CD8-positive, alpha-beta T cell (primary cell): ENCODE measurements at regions of chr1 and their contacts with region 1.

Region 1: DNA sequence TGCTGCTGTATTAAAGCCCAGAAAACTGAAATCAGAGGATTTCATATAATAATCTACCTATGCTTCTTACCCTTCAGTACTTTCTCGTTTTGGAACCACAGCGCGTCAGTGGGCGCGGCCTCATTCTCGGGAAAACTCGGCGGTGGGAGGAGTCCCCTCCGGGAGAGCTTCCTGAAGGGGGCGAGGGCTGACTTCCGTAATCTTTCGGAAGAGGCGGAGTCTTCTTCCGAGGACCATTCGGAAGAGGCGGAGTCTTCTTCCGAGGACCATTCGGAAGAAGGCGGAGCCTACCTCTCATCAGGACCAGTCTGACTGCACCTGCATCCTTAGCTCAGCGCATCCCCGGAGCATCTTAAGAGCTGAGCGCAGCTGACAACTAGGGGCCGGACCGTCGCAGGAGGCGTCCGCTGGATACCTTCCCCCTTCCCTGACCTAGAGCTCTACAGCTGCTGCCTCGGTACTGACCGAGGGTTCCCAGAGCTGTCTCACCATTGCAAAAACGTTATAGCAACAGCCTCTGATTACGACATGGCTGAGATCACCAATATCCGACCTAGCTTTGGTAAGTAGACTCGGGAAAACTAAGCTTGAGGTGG is at the start of gene SYT11:
- DNase-seq: peak; percentile 79 to 97 (median 93)
- ATAC-seq: peak; percentile 85
- H3K4me3 ChIP-seq: peak within 1 kb of the TSS; percentile 61 to 64
- H3K4me3 Mint-ChIP-seq: peak within 1 kb of the TSS; percentile 83
- H3K27ac ChIP-seq: peak within 1 kb of the TSS; percentile 45 to 96
- H3K27ac Mint-ChIP-seq: peak within 1 kb of the TSS; percentile 90
- H3K4me1 ChIP-seq: peaks cover 37% of the 10 kb centered on the region
- H3K4me1 Mint-ChIP-seq: peaks cover 44% of the 10 kb centered on the region
- H3K27me3 ChIP-seq: no peaks in the 10 kb centered on the region
- H3K27me3 Mint-ChIP-seq: peaks cover 5% of the 10 kb centered on the region
- CTCF ChIP-seq: no peak
- total RNA-seq, gene SYT11: 6.9 to 8.6 TPM

Region 2: DNA sequence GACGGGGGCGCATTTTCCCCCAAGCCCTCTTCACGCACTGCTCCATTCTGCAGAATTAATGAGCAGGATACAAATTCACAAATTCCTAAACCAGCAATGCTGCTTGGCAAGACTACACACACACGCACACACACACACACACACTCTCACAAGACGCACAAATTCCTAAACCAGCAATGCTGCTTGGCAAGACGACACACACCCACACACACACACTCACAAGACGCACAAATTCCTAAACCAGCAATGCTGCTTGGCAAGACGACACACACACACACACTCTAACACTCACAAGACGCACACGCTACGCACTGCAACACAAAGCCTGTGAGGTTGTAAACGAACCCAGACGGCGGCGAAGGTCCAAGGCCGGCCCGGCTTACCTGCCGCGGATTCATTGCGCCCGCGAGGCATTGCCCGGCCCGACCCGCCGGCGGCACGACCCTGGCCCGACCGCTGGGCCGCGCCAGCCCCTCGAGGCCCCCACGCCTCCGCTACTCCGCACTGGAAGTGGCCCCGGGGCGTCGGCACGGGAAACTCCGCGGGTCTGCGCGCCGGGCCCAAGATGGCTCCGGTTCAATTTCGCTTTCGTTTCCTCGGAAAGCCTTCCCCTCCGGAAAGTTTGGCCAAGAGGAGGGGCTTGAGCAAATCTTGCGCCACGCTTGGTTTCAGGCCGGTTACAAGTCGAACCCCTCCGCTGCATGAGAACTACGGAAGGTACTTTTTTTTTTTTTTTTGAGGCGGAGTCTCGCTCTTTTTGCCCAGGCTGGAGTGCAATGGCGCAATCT is 1251.5 kb before region 1 on chr1 and contains the start of gene ADAR:
- CTCF ChIA-PET with region 1: no interaction called
- POLR2A ChIA-PET with region 1: no interaction called
- intact Hi-C with region 1: loop called in 1 of 2 experiments (anchors 5 kb)
- DNase-seq: peak; percentile 72 to 98 (median 87)
- ATAC-seq: peak; percentile 85
- H3K4me3 ChIP-seq: peak within 1 kb of the TSS; percentile 89 to 90
- H3K4me3 Mint-ChIP-seq: peak within 1 kb of the TSS; percentile 98
- H3K27ac ChIP-seq: peak within 1 kb of the TSS; percentile 92 to 96
- H3K27ac Mint-ChIP-seq: peak within 1 kb of the TSS; percentile 98
- H3K4me1 ChIP-seq: peaks cover 59% of the 10 kb centered on the region
- H3K4me1 Mint-ChIP-seq: peaks cover 73% of the 10 kb centered on the region
- H3K27me3 ChIP-seq: no peaks in the 10 kb centered on the region
- H3K27me3 Mint-ChIP-seq: no peaks in the 10 kb centered on the region
- CTCF ChIP-seq: no peak
- total RNA-seq, gene ADAR: 221 to 238 TPM

Region 3: DNA sequence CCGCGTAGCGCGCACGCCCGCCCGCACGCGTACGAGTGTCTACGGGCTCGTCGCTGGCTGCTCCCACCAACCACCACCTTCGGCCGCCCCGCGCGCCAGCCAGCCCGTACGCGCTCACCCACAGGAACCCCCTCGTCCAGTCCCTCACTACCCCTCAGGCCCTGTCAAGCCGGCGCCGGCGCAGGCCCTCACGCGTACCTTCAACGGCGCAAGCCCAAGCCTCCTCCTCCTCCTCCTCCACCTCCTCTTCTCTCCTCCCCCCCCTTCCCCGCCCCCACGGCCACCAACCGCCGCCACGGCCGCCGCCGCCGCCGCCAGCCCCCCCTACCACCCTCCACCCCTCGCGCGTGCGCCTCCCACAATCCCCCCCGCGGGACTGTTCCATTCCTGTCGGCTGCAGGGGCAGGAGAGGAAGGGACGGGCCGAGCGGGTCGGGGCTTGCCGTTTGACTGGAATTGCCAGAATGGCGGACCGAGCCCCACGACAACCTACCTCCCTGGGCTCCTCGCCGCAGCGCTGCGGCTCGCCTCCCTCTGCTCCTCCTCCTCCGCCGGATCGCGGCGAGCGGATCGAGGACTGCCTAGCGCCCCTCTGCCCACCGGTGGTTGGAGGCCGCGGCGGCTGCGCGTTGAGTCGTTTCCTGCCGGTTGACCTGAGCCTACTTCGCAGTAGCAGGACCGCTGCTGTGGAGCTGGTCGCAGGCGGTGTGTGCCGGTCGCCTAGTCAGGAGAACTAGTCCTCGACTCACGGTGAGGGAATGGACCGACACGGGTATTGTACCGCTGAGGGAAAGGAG is 296.6 kb before region 1 on chr1 and contains the start of gene ASH1L:
- CTCF ChIA-PET with region 1: no interaction called
- POLR2A ChIA-PET with region 1: no interaction called
- intact Hi-C with region 1: loop called in 1 of 2 experiments (anchors 10 kb)
- DNase-seq: peak; percentile 89 to 98 (median 94)
- ATAC-seq: peak; percentile 73
- H3K4me3 ChIP-seq: peak within 1 kb of the TSS; percentile 91 to 100
- H3K4me3 Mint-ChIP-seq: peak within 1 kb of the TSS; percentile 99
- H3K27ac ChIP-seq: peak within 1 kb of the TSS; percentile 97 to 98
- H3K27ac Mint-ChIP-seq: peak within 1 kb of the TSS; percentile 98
- H3K4me1 ChIP-seq: peaks cover 38% of the 10 kb centered on the region
- H3K4me1 Mint-ChIP-seq: peaks cover 53% of the 10 kb centered on the region
- H3K27me3 ChIP-seq: no peaks in the 10 kb centered on the region
- H3K27me3 Mint-ChIP-seq: no peaks in the 10 kb centered on the region
- CTCF ChIP-seq: no peak
- total RNA-seq, gene ASH1L: 54.6 to 58.9 TPM

Region 4: DNA sequence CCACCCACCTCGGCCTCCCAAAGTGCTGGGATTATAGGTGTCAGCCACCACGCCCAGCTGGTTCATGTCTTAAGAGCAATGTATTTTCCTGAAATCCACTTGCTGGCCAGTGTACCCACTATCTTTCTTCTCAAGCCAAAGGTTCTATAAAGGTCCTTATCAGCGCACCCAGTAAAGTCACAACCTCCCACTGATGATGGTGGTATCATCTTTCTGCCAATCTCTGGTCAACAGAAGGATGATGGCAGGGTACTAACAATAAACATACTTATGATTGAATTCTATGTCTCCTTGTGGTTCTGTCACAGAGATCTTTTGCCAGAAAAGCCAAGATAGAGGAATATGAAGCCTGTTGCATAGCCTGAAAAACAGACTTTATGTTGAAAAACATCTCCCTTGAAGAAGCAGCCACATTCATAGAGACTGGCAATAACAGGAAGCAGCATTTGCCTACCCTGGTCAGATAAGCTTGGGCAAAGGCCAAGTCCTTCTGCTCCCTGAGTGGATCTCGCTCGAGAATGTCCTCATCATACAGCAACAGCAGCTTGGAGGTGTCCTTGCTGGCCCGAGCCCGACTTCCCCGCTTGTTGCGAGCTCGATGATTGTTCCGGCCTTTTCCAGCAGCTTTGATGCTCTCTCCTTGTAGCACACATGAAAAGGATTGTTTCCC is 97.5 kb before region 1 on chr1:
- CTCF ChIA-PET with region 1: no interaction called
- POLR2A ChIA-PET with region 1: no interaction called
- intact Hi-C with region 1: no loop called
- DNase-seq: no peak
- ATAC-seq: no peak
- H3K4me3 ChIP-seq: no peak overlapping the region
- H3K4me3 Mint-ChIP-seq: no peak overlapping the region
- H3K27ac ChIP-seq: no peak overlapping the region
- H3K27ac Mint-ChIP-seq: no peak overlapping the region
- H3K4me1 ChIP-seq: no peaks in the 10 kb centered on the region
- H3K4me1 Mint-ChIP-seq: no peaks in the 10 kb centered on the region
- H3K27me3 ChIP-seq: no peaks in the 10 kb centered on the region
- H3K27me3 Mint-ChIP-seq: no peaks in the 10 kb centered on the region
- CTCF ChIP-seq: no peak

Region 5: DNA sequence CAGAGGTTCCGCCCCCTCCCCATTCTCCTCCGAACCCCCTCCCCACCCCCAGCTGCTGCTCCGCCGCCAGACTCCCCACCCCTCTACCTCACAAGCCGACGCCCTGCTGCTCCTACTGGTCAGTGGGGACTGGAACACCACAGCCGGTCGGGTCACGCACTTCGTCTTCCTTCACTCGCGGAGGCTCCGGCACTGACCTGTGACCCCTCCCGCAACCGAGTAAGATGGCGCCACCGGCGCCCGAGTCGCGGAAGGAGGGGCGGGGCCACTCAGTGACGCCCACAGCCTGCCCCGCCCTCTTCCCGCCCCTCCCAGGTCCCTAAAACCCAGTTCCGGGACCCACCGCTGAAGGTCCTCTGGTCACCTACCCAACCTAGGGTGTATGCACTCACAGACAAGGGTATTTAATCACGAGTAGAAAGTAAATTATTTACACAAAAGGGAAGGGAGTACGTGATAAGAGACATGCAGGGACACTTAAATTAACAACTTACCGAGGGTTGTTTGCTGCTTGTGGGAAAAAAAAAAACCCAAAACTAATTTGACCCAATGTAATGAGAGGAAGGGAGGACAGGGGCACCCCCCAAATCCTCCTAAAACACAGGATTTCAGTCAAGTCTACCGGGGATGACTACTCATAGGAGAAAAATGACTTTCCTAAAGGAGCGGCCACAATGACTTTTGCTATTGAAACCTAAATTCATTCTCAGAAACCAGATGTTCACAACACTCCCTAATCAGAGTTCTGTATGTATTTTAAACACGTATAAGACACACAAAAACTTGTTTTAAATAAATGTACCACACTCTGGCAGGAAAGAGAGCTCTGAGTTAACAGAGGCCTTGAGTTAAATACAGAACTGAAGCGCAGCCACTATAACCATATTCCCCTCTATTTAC is 52.1 kb after region 1 on chr1 and contains the start of gene RIT1:
- CTCF ChIA-PET with region 1: interaction called, 3 read pairs
- POLR2A ChIA-PET with region 1: no interaction called
- intact Hi-C with region 1: loop called (anchors 1 kb)
- DNase-seq: peak; percentile 62 to 93 (median 85)
- ATAC-seq: peak; percentile 97
- H3K4me3 ChIP-seq: peak within 1 kb of the TSS; percentile 68 to 72
- H3K4me3 Mint-ChIP-seq: peak within 1 kb of the TSS; percentile 97
- H3K27ac ChIP-seq: peak within 1 kb of the TSS; percentile 71 to 73
- H3K27ac Mint-ChIP-seq: peak within 1 kb of the TSS; percentile 98
- H3K4me1 ChIP-seq: peaks cover 21% of the 10 kb centered on the region
- H3K4me1 Mint-ChIP-seq: peaks cover 27% of the 10 kb centered on the region
- H3K27me3 ChIP-seq: no peaks in the 10 kb centered on the region
- H3K27me3 Mint-ChIP-seq: no peaks in the 10 kb centered on the region
- CTCF ChIP-seq: no peak
- total RNA-seq, gene RIT1: 79.6 to 85.0 TPM

Region 6: DNA sequence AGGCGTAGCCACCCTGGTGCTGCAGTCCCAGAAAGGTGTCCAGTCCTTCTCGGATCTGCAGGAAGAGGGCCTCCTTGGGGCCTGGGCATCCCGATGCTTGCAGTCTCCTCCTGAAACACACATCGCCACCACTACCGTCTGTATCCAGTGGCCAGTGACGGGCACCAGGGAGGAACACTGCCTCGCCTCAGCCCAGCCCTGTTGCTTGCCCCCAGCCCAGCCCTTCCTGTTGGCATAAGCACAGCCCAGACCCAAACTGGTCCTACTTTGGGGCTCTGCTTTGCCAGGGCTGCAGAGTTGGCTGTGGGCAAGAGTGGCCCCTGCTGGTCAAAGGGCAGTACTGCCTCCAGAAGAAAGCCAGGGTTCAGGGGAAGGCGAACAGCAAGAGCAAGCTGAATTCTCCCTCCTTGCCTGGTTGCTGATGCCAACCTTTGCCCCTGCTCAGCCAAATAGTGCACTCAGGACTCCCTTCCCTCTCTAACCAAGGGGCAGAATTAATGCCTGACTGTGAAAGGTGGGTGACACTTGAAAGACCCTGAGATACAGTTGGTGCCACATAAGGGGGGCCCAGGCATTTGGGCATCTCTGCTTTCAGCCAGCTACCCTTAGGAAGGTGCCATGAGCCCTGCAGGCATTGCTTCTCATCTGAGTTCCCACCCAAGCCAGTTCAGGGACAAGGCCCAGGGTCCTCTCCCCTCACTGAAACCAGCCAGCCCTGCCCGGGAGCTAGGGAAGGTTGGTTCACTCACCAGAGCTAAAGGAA is 130.1 kb after region 1 on chr1:
- CTCF ChIA-PET with region 1: interaction called, 4 read pairs
- POLR2A ChIA-PET with region 1: no interaction called
- intact Hi-C with region 1: loop called in 1 of 2 experiments (anchors 1 kb)
- DNase-seq: peak; percentile 64 to 89 (median 78)
- ATAC-seq: peak; percentile 100
- H3K4me3 ChIP-seq: no peak overlapping the region
- H3K4me3 Mint-ChIP-seq: no peak overlapping the region
- H3K27ac ChIP-seq: no peak overlapping the region
- H3K27ac Mint-ChIP-seq: no peak overlapping the region
- H3K4me1 ChIP-seq: peaks cover 7% of the 10 kb centered on the region
- H3K4me1 Mint-ChIP-seq: peaks cover 9% of the 10 kb centered on the region
- H3K27me3 ChIP-seq: no peaks in the 10 kb centered on the region
- H3K27me3 Mint-ChIP-seq: no peaks in the 10 kb centered on the region
- CTCF ChIP-seq: peak; percentile 97